ENCODE measurements at regions of chr2 and their contacts with region 1.

Region 1: GRCh38 chr2:9656270-9656766 is 25.5 kb upstream of the YWHAQ start:
- DNase-seq: peak; percentile 71
- H3K4me3 Mint-ChIP-seq: peak overlapping the region; percentile 35
- H3K27ac Mint-ChIP-seq: peak overlapping the region; percentile 91
- H3K4me1 Mint-ChIP-seq: peaks cover 48% of the 10 kb centered on the region
- H3K27me3 Mint-ChIP-seq: peaks cover 3% of the 10 kb centered on the region

Region 2: DNA sequence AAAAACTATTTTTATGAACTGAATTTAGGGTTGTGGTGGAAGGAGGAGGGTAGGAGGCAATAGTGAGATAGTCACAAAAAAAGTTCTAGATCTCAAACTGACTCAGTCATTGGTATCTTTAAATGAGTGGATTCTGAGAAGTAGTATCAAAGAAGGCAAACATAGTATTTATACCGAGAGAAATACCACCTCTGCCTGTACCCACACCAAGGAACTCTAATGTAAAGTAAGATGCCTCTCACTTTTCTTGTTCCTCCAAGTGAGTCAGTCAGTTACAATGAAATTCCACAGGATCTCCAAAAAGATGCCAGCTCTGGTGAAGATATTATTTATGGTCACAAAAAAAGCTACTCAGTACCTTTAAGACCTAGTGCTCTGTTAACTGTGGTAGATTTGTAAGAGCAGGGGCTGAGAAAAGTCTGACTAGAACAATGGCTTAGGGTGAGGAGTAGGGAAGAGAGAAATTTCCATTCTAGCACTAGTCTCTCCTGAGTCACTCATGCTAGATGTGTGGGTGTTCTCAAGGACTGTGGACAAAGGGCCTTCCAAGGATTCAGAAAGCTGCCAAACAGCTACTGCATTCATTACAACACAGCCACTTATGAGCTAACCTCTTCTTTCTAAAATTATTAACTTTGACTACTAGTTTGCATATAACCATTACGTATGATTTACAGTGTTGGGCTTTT is 61.8 kb before region 1 on chr2:
- intact Hi-C with region 1: loop called (anchors 1 kb)
- DNase-seq: no peak
- H3K4me3 Mint-ChIP-seq: peak overlapping the region; percentile 28
- H3K27ac Mint-ChIP-seq: peak overlapping the region; percentile 85
- H3K4me1 Mint-ChIP-seq: peaks cover 71% of the 10 kb centered on the region
- H3K27me3 Mint-ChIP-seq: no peaks in the 10 kb centered on the region

Region 3: GRCh38 chr2:9641641-9642040 is 14.7 kb before region 1 on chr2:
- intact Hi-C with region 1: loop called (anchors 1 kb)
- DNase-seq: peak; percentile 34
- H3K4me3 Mint-ChIP-seq: peak overlapping the region; percentile 48
- H3K27ac Mint-ChIP-seq: peak overlapping the region; percentile 59
- H3K4me1 Mint-ChIP-seq: peaks cover 29% of the 10 kb centered on the region
- H3K27me3 Mint-ChIP-seq: peaks cover 10% of the 10 kb centered on the region

Region 4: GRCh38 chr2:9703085-9703641 is 46.8 kb after region 1 on chr2:
- intact Hi-C with region 1: loop called (anchors 1 kb)
- DNase-seq: peak; percentile 79
- H3K4me3 Mint-ChIP-seq: no peak overlapping the region
- H3K27ac Mint-ChIP-seq: peak overlapping the region; percentile 74
- H3K4me1 Mint-ChIP-seq: peaks cover 48% of the 10 kb centered on the region
- H3K27me3 Mint-ChIP-seq: no peaks in the 10 kb centered on the region

Region 5: GRCh38 chr2:9782197-9782719 is 125.9 kb after region 1 on chr2:
- intact Hi-C with region 1: loop called (anchors 1 kb)
- DNase-seq: peak; percentile 76
- H3K4me3 Mint-ChIP-seq: peak overlapping the region; percentile 66
- H3K27ac Mint-ChIP-seq: peak overlapping the region; percentile 84
- H3K4me1 Mint-ChIP-seq: peaks cover 66% of the 10 kb centered on the region
- H3K27me3 Mint-ChIP-seq: no peaks in the 10 kb centered on the region

Region 6: GRCh38 chr2:10103179-10103732 is 446.9 kb after region 1 on chr2:
- intact Hi-C with region 1: no loop called
- DNase-seq: no peak
- H3K4me3 Mint-ChIP-seq: no peak overlapping the region
- H3K27ac Mint-ChIP-seq: no peak overlapping the region
- H3K4me1 Mint-ChIP-seq: no peaks in the 10 kb centered on the region
- H3K27me3 Mint-ChIP-seq: peaks cover 16% of the 10 kb centered on the region